Activated CD4-positive, alpha-beta memory T cell treated with anti-CD3 and anti-CD28 coated beads for 36 hours (primary cell): ENCODE measurements at regions of chr21 and their contacts with region 1.

Region 1: DNA sequence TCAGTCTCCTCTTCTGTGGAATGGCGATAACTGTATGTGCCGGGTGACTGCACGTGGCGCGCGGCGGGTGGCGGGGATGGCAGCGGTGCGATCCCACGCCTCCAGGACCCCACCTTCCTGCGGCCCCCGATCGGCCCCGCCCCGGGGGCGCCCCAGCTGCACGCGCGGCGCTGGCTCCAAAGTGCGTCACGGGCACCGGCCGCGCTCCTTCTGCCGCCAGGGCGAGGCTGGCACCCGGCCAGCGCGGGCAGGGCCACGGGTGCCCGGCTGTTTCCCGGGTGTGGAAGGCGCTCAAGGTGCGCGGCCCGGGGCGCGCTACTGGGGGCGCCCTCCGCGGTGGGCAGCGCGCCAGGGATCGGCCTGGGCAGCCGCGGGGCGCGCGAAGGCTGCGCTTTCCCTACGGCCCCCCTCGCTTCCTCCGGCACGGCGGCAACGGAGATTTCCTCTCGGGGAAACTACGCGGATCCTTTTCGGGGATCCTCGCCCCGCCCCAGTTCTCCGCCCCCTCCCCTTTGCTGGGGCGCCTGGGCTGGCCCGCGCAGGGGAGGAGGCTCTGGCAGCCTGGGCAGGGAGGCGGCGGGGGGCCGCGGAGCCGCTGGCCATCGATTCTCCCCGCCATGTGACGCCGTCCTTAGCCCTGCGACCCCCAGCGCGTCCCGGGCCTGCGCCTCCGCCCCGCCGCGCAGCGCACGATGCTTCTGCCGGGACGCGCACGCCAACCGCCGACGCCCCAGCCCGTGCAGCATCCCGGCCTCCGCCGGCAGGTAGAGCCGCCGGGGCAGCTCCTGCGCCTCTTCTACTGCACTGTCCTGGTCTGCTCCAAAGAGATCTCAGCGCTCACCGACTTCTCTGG is at the start of gene EVA1C:
- DNase-seq: peak; percentile 76
- H3K4me3 Mint-ChIP-seq: peak within 1 kb of the TSS; percentile 91
- H3K27ac Mint-ChIP-seq: peak within 1 kb of the TSS; percentile 89
- H3K4me1 Mint-ChIP-seq: peaks cover 33% of the 10 kb centered on the region
- H3K27me3 Mint-ChIP-seq: no peaks in the 10 kb centered on the region
- total RNA-seq, gene EVA1C: 9.3 to 9.6 TPM

Region 2: GRCh38 chr21:32278518-32279376 is 133.6 kb before region 1 on chr21 and contains the start of gene MIS18A:
- CTCF ChIA-PET with region 1: no interaction called
- POLR2A ChIA-PET with region 1: interaction called, 3 read pairs
- intact Hi-C with region 1: loop called (anchors 1 kb)
- DNase-seq: peak; percentile 99
- H3K4me3 Mint-ChIP-seq: peak within 1 kb of the TSS; percentile 99
- H3K27ac Mint-ChIP-seq: peak within 1 kb of the TSS; percentile 88
- H3K4me1 Mint-ChIP-seq: peaks cover 11% of the 10 kb centered on the region
- H3K27me3 Mint-ChIP-seq: no peaks in the 10 kb centered on the region
- total RNA-seq, gene MIS18A: 34.2 to 36.1 TPM

Region 3: GRCh38 chr21:32494934-32495703 is 82.7 kb after region 1 on chr21:
- CTCF ChIA-PET with region 1: no interaction called
- POLR2A ChIA-PET with region 1: no interaction called
- intact Hi-C with region 1: loop called (anchors 2 kb)
- DNase-seq: no peak
- H3K4me3 Mint-ChIP-seq: no peak overlapping the region
- H3K27ac Mint-ChIP-seq: no peak overlapping the region
- H3K4me1 Mint-ChIP-seq: no peaks in the 10 kb centered on the region
- H3K27me3 Mint-ChIP-seq: no peaks in the 10 kb centered on the region